ENCODE measurements at regions of chr1 and their contacts with region 1.

Region 1: DNA sequence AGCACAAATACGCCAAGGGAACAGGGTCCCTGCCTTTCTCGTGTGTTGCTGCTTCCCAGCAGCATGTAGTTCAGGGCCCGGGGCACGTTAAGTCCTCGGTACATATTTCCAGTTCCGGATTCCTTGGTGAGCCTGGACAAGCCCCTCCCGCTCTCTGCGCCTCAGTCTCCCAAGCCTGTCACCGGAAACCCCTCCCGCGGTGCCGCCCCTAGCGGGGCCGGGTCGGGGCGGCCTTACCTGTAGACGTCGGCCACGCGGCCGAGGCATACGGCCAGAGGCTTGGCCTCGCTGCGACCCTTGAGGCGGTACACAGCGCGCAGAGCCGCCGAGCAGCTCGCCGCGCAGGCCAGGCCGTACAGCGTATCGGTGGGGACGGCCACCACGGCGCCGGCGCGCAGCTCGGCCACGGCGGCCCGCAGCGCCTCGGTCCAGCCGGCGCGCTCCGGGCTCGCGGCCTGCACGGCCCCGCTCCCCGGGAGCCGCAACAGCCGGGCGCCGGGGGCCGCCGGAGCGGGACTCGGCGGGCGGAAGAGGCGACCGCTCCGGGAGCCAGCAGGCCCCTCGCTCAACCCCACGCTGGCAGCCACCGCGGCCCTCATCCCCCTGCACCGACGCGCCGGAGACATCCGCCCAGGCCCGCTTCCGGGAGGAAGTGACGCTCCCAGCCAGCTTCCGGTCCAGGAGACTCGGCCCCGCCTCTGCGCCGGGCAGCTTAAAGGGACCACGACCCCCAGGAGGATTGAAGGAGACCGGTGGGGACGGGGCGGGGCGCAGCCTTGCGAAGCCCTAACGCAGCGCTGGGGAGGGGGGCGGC is at the starts of genes C1orf122 and YRDC:
- DNase-seq: peak; percentile 96
- ATAC-seq: peak; percentile 95 to 96
- total RNA-seq, gene C1orf122: 50.0 to 58.8 TPM
- total RNA-seq, gene YRDC: 5.6 to 9.7 TPM

Region 2: DNA sequence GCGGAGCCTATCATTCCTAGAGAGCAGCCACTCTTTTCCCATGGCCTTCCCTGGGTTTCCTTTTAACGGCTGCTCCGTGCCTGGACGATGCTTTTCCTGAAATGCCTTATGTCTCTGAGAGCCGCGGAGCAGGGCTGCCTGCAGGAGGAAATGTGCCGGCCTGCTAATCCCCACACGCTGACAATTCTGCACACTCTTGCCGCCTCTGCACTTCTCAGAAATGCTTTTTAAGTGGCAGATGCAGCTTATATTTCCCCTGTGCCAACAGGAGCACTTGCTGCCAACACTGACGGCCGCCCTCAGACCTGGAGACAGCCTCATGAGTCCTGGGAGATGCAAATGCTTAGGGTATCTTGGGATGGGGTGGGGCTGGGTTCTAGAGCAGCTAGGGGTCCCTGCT is 1026.7 kb before region 1 on chr1:
- intact Hi-C with region 1: no loop called
- DNase-seq: no peak
- ATAC-seq: no peak

Region 3: DNA sequence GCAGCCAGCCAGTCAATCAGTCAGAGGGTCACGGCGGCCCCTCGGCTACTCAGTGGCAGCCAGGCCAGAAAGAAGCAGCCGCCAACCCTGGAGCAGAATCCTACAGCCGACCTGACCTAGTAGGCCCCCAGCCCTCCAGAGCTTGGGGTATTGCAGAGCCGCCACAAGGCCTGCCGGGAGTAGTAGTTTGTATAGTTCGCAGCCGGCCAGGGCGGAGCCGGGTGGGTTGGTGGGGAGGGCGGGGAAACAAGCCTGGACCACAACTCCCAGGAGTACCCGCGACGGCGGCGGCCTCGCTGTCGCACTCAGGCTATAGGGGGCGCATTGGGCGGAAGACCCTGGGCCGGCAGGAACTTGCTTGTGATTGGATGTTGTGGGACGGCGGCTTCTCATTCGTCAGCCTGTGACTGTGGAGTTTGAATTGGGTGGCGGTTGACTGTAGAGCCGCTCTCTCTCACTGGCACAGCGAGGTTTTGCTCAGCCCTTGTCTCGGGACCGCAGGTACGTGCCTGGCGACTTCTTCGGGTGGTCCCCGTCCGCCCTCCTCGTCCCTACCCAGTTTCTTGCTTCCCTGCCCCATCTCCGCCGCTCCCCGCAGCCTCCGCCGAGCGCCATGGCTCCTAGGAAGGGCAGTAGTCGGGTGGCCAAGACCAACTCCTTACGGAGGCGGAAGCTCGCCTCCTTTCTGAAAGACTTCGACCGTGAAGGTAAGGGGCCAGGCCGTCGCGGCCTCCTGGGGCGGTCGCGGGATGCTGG is 115.5 kb before region 1 on chr1 and contains the start of gene CDCA8:
- intact Hi-C with region 1: loop called in 1 of 2 experiments (anchors 5 kb)
- DNase-seq: peak; percentile 98
- ATAC-seq: peak; percentile 95 to 96
- total RNA-seq, gene CDCA8: 0.24 to 0.88 TPM

Region 4: GRCh38 chr1:37859507-37860345 is 52.0 kb after region 1 on chr1 and contains the start of gene MTF1:
- intact Hi-C with region 1: loop called in 1 of 2 experiments (anchors 5 kb)
- DNase-seq: peak; percentile 98
- ATAC-seq: peak; percentile 99 to 100
- total RNA-seq, gene MTF1: 14.9 to 15.5 TPM